ENCODE measurements at regions of chr5 and their contacts with region 1.

Region 1: GRCh38 chr5:56257010-56257409 is 23.9 kb upstream of the ANKRD55 start:
- DNase-seq: no peak
- ATAC-seq: no peak
- H3K4me3 ChIP-seq: no peak overlapping the region
- H3K27ac ChIP-seq: no peak overlapping the region
- H3K4me1 ChIP-seq: peaks cover 12 to 29% of the 10 kb centered on the region in 2 experiments
- H3K27me3 ChIP-seq: no peaks in the 10 kb centered on the region
- CTCF ChIP-seq: no peak
- EP300 ChIP-seq: no peak
- POLR2A ChIP-seq: no peak
- RAD21 ChIP-seq: no peak

Region 2: GRCh38 chr5:56211298-56211865 is 45.6 kb before region 1 on chr5:
- CTCF ChIA-PET with region 1: no interaction called
- POLR2A ChIA-PET with region 1: no interaction called
- in situ Hi-C with region 1: no loop called
- intact Hi-C with region 1: loop called (anchors 2 kb)
- DNase-seq: no peak
- ATAC-seq: no peak
- H3K4me3 ChIP-seq: no peak overlapping the region
- H3K27ac ChIP-seq: no peak overlapping the region
- H3K4me1 ChIP-seq: no peaks in the 10 kb centered on the region; a peak in 1 of 5 replicates
- H3K27me3 ChIP-seq: no peaks in the 10 kb centered on the region
- CTCF ChIP-seq: no peak
- EP300 ChIP-seq: no peak
- POLR2A ChIP-seq: no peak
- RAD21 ChIP-seq: no peak

Region 3: DNA sequence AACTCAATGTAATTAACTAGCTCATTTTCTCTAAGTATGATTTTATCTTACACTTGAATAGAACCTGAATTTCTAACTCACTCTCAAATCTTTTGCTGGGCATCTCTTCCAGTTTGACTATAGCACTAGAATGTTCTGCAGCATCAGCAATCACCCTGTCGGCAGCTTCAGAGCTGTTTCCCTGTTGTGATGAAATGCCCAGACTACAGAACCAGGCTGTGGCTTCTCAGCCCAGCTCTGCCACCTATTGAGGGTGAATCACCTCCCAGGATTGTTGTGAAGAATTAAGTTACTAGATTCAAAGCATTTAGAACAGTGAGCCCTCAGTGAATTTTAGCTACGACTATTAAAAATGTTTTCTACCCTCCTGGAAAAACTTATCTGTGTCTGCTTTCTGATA is 66.5 kb after region 1 on chr5:
- CTCF ChIA-PET with region 1: no interaction called
- POLR2A ChIA-PET with region 1: no interaction called
- in situ Hi-C with region 1: no loop called
- intact Hi-C with region 1: no loop called
- DNase-seq: no peak
- ATAC-seq: no peak
- H3K4me3 ChIP-seq: no peak overlapping the region
- H3K27ac ChIP-seq: no peak overlapping the region
- H3K4me1 ChIP-seq: no peaks in the 10 kb centered on the region; a peak in 1 of 5 replicates
- H3K27me3 ChIP-seq: peaks cover 16 to 22% of the 10 kb centered on the region in 2 experiments
- CTCF ChIP-seq: no peak
- EP300 ChIP-seq: no peak
- POLR2A ChIP-seq: no peak
- RAD21 ChIP-seq: no peak